Left ventricle myocardium inferior (tissue), 1 donor: ENCODE measurements at regions of chr15 and their contacts with region 1.

Region 1: DNA sequence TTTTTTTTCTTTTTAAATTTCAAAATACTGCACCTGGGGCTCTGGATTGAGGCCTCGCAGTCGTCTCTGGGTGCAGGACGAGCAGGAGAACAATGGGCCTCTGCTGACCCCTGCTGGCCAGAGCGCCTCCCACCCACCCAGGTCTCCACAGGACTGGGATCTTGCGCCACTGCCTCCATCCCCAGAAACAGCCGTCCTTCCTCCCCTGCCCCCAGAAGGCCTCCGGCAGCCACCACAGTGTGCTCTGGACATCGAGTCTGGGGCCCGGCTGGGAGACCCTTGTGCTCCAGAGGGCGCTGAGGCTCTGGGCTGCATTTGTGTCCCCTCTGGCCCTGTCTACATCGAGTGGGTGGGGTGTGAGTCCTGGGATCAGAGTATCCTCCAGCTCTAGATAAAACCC is 6.6 kb upstream of the ACSBG1 start:
- DNase-seq: peak; percentile 86
- H3K4me3 ChIP-seq: no peak overlapping the region
- H3K27ac ChIP-seq: no peak overlapping the region
- H3K4me1 ChIP-seq: peaks cover 9% of the 10 kb centered on the region
- H3K27me3 ChIP-seq: no peaks in the 10 kb centered on the region
- CTCF ChIP-seq: peak; percentile 92

Region 2: DNA sequence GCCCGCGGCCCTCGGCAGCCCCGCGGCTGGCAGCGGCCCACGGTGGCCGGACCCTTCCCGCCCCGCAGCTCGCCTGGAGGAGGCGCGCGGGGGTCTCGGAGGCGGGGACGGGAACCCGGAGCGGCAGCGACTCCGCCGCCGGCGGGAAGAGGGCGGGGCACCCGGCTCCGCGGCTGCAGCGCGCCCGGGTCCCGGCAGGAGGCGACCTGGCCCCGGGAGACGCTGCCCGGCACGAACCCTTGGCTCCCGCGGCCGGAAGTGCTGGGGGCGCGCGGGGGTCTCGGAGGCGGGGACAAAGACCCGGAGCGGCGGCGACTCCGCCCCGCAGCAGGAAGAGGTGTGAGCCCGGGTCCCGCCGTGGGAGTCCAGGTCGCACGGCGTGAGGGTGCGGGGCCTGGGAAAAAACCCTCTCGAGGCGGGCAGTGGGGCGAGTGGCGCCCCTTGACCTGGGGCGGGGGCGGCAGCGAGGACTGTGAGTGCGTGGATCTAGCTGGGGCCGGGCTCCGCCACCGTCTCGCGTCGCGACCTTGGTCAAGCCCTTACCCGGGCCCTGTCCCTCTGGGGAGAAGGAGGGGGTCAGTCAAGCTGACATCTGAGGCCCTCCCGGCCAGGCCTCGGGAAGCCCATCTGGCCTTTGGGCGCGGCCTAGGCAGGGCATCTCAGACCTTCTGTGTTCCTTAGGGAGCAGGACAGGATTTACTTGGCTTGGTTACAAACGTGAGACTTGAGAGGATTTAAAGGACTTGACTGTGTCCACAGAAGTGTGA is 109.5 kb before region 1 on chr15 and contains the start of gene CIB2:
- intact Hi-C with region 1: loop called (anchors 5 kb)
- DNase-seq: peak; percentile 75
- H3K4me3 ChIP-seq: peak within 1 kb of the TSS; percentile 82
- H3K27ac ChIP-seq: peak within 1 kb of the TSS; percentile 83
- H3K4me1 ChIP-seq: peaks cover 25% of the 10 kb centered on the region
- H3K27me3 ChIP-seq: no peaks in the 10 kb centered on the region
- CTCF ChIP-seq: peak; percentile 90
- total RNA-seq, gene CIB2: 26.1 TPM

Region 3: DNA sequence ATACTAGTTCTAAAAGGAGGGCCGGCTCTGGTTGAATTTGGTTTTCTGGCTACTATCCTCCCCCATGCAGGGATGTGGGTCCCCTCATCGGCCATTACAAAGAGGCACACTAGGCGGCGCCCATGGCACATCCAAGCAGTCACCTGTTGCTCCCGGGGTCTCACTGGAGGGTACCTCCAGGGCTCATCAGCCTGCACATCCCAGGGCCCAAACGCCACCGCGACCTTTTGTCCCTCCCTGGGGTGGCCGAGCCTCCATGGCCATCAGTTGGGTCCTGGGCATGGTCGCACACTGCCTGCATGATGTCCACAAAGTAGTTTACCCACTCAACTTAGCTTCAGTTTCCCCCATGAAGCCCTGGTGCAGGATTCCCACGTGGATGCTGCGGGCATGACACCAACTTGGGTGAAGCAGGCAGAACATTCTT is 63.5 kb before region 1 on chr15:
- intact Hi-C with region 1: loop called (anchors 10 kb)
- DNase-seq: peak; percentile 44
- H3K4me3 ChIP-seq: no peak overlapping the region
- H3K27ac ChIP-seq: no peak overlapping the region
- H3K4me1 ChIP-seq: no peaks in the 10 kb centered on the region
- H3K27me3 ChIP-seq: no peaks in the 10 kb centered on the region
- CTCF ChIP-seq: peak; percentile 75